ENCODE measurements at regions of chr17 and their contacts with region 1.

Region 1: GRCh38 chr17:43360739-43361505 is 37.9 kb upstream of the ARL4D start:
- DNase-seq: peak; percentile 90 to 98 (median 93)
- H3K4me3 ChIP-seq: peak overlapping the region; percentile 68 to 77
- H3K4me3 Mint-ChIP-seq: peak overlapping the region; percentile 90 to 99 (median 94)
- H3K27ac ChIP-seq: peak overlapping the region; percentile 93
- H3K27ac Mint-ChIP-seq: peak overlapping the region; percentile 97 to 100 (median 99)
- H3K4me1 ChIP-seq: peaks cover 17% of the 10 kb centered on the region
- H3K4me1 Mint-ChIP-seq: peaks cover 14 to 35% (median 24%) of the 10 kb centered on the region in 4 donors
- H3K27me3 ChIP-seq: no peaks in the 10 kb centered on the region
- H3K27me3 Mint-ChIP-seq: no peaks in the 10 kb centered on the region

Region 2: GRCh38 chr17:42819944-42820535 is 540.9 kb before region 1 on chr17:
- CTCF ChIA-PET with region 1: no interaction called
- POLR2A ChIA-PET with region 1: interaction called, 7 read pairs
- intact Hi-C with region 1: loop called (anchors 5 kb)
- DNase-seq: peak; percentile 46 to 66 (median 49)
- H3K4me3 ChIP-seq: no peak overlapping the region
- H3K4me3 Mint-ChIP-seq: peak overlapping the region in 1 of 8 donors; percentile 26
- H3K27ac ChIP-seq: no peak overlapping the region
- H3K27ac Mint-ChIP-seq: peak overlapping the region; percentile 18 to 65 (median 36)
- H3K4me1 ChIP-seq: peaks cover 15% of the 10 kb centered on the region
- H3K4me1 Mint-ChIP-seq: peaks cover 16 to 41% (median 25%) of the 10 kb centered on the region in 4 donors
- H3K27me3 ChIP-seq: no peaks in the 10 kb centered on the region
- H3K27me3 Mint-ChIP-seq: no peaks in the 10 kb centered on the region

Region 3: DNA sequence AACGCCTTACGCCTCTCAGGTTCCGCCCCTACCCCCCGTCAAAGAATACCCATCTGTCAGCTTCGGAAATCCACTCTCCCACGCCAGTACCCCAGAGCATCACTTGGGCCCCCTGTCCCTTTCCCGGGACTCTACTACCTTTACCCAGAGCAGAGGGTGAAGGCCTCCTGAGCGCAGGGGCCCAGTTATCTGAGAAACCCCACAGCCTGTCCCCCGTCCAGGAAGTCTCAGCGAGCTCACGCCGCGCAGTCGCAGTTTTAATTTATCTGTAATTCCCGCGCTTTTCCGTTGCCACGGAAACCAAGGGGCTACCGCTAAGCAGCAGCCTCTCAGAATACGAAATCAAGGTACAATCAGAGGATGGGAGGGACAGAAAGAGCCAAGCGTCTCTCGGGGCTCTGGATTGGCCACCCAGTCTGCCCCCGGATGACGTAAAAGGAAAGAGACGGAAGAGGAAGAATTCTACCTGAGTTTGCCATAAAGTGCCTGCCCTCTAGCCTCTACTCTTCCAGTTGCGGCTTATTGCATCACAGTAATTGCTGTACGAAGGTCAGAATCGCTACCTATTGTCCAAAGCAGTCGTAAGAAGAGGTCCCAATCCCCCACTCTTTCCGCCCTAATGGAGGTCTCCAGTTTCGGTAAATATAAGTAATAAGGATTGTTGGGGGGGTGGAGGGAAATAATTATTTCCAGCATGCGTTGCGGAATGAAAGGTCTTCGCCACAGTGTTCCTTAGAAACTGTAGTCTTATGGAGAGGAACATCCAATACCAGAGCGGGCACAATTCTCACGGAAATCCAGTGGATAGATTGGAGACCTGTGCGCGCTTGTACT is 235.6 kb before region 1 on chr17 and contains the start of gene BRCA1:
- CTCF ChIA-PET with region 1: no interaction called
- POLR2A ChIA-PET with region 1: interaction called, 10 read pairs
- intact Hi-C with region 1: loop called (anchors 1 kb)
- DNase-seq: peak; percentile 95 to 98 (median 97)
- H3K4me3 ChIP-seq: peak within 1 kb of the TSS; percentile 80 to 89
- H3K4me3 Mint-ChIP-seq: peak within 1 kb of the TSS; percentile 87 to 98 (median 96)
- H3K27ac ChIP-seq: peak within 1 kb of the TSS; percentile 72
- H3K27ac Mint-ChIP-seq: peak within 1 kb of the TSS; percentile 82 to 98 (median 96)
- H3K4me1 ChIP-seq: peaks cover 17% of the 10 kb centered on the region
- H3K4me1 Mint-ChIP-seq: peaks cover 19 to 35% (median 27%) of the 10 kb centered on the region in 4 donors
- H3K27me3 ChIP-seq: no peaks in the 10 kb centered on the region
- H3K27me3 Mint-ChIP-seq: no peaks in the 10 kb centered on the region
- total RNA-seq, gene BRCA1: 4.8 to 6.0 TPM

Region 4: GRCh38 chr17:43316522-43317142 is 44.3 kb before region 1 on chr17:
- CTCF ChIA-PET with region 1: no interaction called
- POLR2A ChIA-PET with region 1: interaction called, 207 read pairs
- intact Hi-C with region 1: loop called (anchors 1 kb)
- DNase-seq: peak in 3 of 5 donors; percentile 20 to 53 (median 20)
- H3K4me3 ChIP-seq: no peak overlapping the region
- H3K4me3 Mint-ChIP-seq: peak overlapping the region in 6 of 8 donors; percentile 5 to 62 (median 44)
- H3K27ac ChIP-seq: no peak overlapping the region
- H3K27ac Mint-ChIP-seq: peak overlapping the region in 2 of 7 donors; percentile 65 to 79
- H3K4me1 ChIP-seq: no peaks in the 10 kb centered on the region
- H3K4me1 Mint-ChIP-seq: peaks cover 5 to 17% (median 11%) of the 10 kb centered on the region in 4 donors
- H3K27me3 ChIP-seq: no peaks in the 10 kb centered on the region
- H3K27me3 Mint-ChIP-seq: no peaks in the 10 kb centered on the region

Region 5: DNA sequence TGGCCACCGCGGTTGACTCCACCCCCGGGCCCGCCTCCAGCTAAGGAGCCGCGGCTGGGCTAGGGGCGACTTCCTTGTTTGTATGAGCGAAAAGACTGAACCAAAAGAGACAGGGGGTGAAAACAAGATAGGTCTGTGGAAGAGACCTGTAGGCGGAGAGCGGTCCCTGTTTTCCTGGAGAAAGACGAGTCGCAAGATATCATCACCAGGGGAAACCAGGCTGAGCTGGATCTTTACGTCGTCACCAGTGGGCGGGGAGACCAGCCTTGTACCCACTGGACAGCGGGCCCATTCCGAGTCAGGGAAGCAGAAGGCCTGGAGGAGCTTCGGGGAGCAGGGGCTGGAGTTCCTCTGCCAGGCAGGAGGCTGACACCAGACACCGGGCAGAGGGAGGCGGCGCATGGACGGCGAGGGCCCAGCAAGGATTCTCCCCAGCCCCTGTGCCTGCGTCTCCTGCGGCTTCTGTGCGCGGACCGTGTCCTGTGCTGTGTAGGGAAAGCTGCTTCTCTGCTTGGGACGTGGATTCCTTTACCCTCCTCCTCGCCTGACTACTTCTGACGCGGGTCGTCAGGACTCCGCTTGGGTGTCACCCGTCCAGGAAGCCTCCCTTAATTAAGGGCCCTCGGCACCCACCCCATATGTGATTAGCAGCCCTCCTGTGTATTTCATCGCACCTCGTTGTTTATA is 27.6 kb after region 1 on chr17:
- CTCF ChIA-PET with region 1: interaction called, 23 read pairs
- POLR2A ChIA-PET with region 1: interaction called, 265 read pairs
- intact Hi-C with region 1: loop called (anchors 1 kb)
- DNase-seq: peak; percentile 92 to 95 (median 93)
- H3K4me3 ChIP-seq: peak overlapping the region; percentile 73 to 86
- H3K4me3 Mint-ChIP-seq: peak overlapping the region; percentile 92 to 100 (median 97)
- H3K27ac ChIP-seq: peak overlapping the region; percentile 93
- H3K27ac Mint-ChIP-seq: peak overlapping the region; percentile 97 to 100 (median 98)
- H3K4me1 ChIP-seq: peaks cover 19% of the 10 kb centered on the region
- H3K4me1 Mint-ChIP-seq: peaks cover 12 to 35% (median 27%) of the 10 kb centered on the region in 4 donors
- H3K27me3 ChIP-seq: no peaks in the 10 kb centered on the region
- H3K27me3 Mint-ChIP-seq: no peaks in the 10 kb centered on the region

Region 6: GRCh38 chr17:43528349-43528987 is 167.5 kb after region 1 on chr17:
- CTCF ChIA-PET with region 1: no interaction called
- POLR2A ChIA-PET with region 1: no interaction called
- intact Hi-C with region 1: no loop called
- DNase-seq: no peak
- H3K4me3 ChIP-seq: no peak overlapping the region
- H3K4me3 Mint-ChIP-seq: no peak overlapping the region
- H3K27ac ChIP-seq: no peak overlapping the region
- H3K27ac Mint-ChIP-seq: no peak overlapping the region
- H3K4me1 ChIP-seq: no peaks in the 10 kb centered on the region
- H3K4me1 Mint-ChIP-seq: peaks cover 0 to 4% (median 2%) of the 10 kb centered on the region in 4 donors
- H3K27me3 ChIP-seq: no peaks in the 10 kb centered on the region
- H3K27me3 Mint-ChIP-seq: no peaks in the 10 kb centered on the region